Activated naive CD8-positive, alpha-beta T cell treated with anti-CD3 and anti-CD28 coated beads, Interleukin-2, amount 10 ng/mL, durations not matched to agents 7 days and 5 days (primary cell): ENCODE measurements at regions of chr7 and their contacts with region 1.

Region 1: DNA sequence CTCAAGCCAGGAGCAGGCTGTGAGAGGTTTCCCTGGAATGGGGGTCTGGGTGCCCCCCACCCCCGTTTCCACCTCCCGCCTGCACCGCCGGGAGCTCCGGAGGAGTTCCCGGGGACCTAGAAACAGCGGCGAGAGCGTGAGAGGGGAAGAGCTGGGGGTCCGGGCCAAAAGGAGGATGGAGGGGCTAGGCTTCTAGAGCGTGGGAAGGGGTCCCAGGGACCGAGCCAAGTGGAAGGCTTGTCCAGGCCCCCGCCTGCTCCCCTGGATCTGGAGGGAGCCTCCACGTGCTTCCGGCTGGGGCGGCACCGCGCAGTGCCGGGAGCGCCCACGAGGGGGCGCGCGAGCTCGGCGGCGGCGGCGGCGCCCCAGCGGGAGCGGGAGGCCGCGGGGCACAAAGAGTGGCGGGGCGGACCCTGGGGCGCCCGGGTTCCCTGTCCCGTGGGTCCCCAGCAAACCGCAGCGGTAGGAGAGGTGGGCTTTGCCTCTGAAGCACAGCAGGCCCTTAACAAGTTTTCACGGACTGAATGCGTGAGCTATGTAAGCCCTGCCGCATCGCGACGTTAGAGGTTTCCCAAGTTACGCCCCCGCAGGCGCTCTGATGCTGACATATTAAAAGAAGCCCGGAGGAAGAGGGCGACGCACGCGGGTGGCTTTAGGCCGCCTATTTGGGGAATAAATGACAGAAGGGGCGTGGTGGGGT is 104.4 kb upstream of the LRRC4 start:
- DNase-seq: peak; percentile 89
- ATAC-seq: peak; percentile 95
- H3K4me3 Mint-ChIP-seq: peak overlapping the region; percentile 72
- H3K27ac Mint-ChIP-seq: no peak overlapping the region
- H3K4me1 Mint-ChIP-seq: peaks cover 8% of the 10 kb centered on the region
- H3K27me3 Mint-ChIP-seq: peaks cover 65% of the 10 kb centered on the region

Region 2: GRCh38 chr7:128209229-128210035 is 73.8 kb after region 1 on chr7:
- POLR2A ChIA-PET with region 1: interaction called, 10 read pairs
- DNase-seq: peak; percentile 70
- ATAC-seq: peak; percentile 65
- H3K4me3 Mint-ChIP-seq: no peak overlapping the region
- H3K27ac Mint-ChIP-seq: peak overlapping the region; percentile 48
- H3K4me1 Mint-ChIP-seq: peaks cover 1% of the 10 kb centered on the region
- H3K27me3 Mint-ChIP-seq: peaks cover 10% of the 10 kb centered on the region